ENCODE measurements at regions of chr14 and their contacts with region 1.

Region 1: DNA sequence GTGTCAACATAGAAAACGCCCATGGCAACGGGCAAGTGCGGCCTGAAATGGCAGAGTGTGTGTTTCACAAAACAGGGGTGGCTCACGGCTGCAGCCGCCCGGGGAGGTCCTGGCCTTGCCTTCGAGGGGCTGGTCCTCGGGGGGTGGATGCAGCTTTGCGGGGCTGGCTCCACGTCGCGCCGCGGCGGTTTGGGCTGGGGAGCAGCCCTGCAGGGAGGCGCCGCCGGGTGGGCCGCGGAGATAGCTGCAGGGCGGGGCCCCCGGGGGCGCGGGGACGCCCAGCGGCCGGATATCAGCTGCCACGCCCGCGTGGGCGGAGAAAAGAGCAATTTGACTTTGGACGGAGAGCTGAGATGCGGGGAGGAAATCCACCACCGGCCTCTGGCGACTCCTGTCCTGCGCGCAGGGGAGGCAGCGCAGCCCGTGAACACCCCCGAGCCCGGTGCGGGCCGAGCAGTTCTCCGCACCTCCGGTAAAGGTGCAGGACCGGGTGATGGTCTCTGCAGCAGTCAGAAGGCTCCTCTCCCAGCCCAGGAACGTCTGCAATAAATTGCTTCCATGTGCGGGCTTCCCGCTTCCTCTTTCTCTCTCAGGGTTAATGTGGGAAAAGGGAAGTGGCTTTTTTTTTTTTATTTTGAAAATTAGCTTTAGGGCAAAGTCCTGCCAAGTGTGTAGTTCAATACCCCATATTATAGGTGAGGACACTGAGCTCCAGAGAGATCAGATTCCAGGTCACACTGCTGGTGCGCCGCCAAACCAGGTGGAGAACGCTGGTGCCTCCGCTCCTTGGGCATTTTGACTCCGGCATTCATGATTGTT is 110.5 kb downstream of the ARF6 start:
- DNase-seq: peak; percentile 86
- H3K4me3 Mint-ChIP-seq: peak overlapping the region; percentile 92
- H3K27ac Mint-ChIP-seq: peak overlapping the region; percentile 98
- H3K4me1 Mint-ChIP-seq: peaks cover 42% of the 10 kb centered on the region
- H3K27me3 Mint-ChIP-seq: no peaks in the 10 kb centered on the region

Region 2: GRCh38 chr14:49767562-49768300 is 235.7 kb before region 1 on chr14 and contains the start of gene KLHDC2:
- CTCF ChIA-PET with region 1: no interaction called
- intact Hi-C with region 1: no loop called
- DNase-seq: peak; percentile 91
- H3K4me3 Mint-ChIP-seq: peak within 1 kb of the TSS; percentile 94
- H3K27ac Mint-ChIP-seq: peak within 1 kb of the TSS; percentile 99
- H3K4me1 Mint-ChIP-seq: peaks cover 34% of the 10 kb centered on the region
- H3K27me3 Mint-ChIP-seq: no peaks in the 10 kb centered on the region
- total RNA-seq, gene KLHDC2: 24.3 to 25.0 TPM

Region 3: GRCh38 chr14:49867831-49868723 is 135.3 kb before region 1 on chr14:
- CTCF ChIA-PET with region 1: interaction called, 5 read pairs
- intact Hi-C with region 1: loop called (anchors 1 kb)
- DNase-seq: peak; percentile 99
- H3K4me3 Mint-ChIP-seq: peak overlapping the region; percentile 92
- H3K27ac Mint-ChIP-seq: peak overlapping the region; percentile 94
- H3K4me1 Mint-ChIP-seq: peaks cover 20% of the 10 kb centered on the region
- H3K27me3 Mint-ChIP-seq: no peaks in the 10 kb centered on the region

Region 4: DNA sequence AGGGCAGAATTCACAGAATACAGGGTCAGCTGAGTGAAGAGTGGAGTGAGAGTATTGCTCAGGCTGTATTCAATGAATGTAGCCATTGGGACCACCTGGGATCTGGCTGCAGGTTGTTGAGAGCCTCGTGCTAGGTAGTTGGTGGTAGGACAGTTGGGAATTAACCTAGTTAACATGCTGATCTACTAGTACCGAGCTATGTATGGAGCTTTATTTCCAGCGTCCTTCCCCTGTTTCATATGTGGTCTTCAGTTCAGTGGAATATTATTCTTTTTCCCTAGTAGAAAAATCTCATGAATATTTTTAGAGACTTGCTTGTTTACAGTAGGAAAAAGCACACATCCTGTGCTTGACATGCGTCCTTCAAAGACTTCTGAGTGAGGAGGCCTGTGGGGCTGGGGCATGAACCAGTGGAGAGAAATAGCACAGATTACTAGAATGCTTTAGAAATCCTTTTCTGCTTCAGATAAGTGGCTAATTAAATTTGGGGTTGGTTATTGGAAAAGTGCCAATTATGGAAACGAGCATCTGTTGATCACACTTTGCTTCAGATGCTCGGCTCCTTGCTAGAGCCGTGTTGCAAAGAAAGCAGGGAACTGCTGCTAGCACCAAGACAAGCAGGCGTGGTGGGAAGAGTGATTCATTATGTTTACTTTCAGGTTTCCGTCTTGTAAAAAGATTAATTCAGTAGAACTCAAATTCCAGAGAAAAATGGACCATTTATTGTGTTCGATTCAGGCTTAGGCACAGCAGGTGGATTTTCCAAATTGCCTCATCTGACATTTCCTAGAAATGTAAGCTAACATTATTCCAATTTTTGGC is 56.9 kb before region 1 on chr14:
- CTCF ChIA-PET with region 1: interaction called, 3 read pairs
- intact Hi-C with region 1: loop called (anchors 1 kb)
- DNase-seq: peak; percentile 51
- H3K4me3 Mint-ChIP-seq: peak overlapping the region; percentile 44
- H3K27ac Mint-ChIP-seq: peak overlapping the region; percentile 62
- H3K4me1 Mint-ChIP-seq: peaks cover 64% of the 10 kb centered on the region
- H3K27me3 Mint-ChIP-seq: no peaks in the 10 kb centered on the region

Region 5: DNA sequence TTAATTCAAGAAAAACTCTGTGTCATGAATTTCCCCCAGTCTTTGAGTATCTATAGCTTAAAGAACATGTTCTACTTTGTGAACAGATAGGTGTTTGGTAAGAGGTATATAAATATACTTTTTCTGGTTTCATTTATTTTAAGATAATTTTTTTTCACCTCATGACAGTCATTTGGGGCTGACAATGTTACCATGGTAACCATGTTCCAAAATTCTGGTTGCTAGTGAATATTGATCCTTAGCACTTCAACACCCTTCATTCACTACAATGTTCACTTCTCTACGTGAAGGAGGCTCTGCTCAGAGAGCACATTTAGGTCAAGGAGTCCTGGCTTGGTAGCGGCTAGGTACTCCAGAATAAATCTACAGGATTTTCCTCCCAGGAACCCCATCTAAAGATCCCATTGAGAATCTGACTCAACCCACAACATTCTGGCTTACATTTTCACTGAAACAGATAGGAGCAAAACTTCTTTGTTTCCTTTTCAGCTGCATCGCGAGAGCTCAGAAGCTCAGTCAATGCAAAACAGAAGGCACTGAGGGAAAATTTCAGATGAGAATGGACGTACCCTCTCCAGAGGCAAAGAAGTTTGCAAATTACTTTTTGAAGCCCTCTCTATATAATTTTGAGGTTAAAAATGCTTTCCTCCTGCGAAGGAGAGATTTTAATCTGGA is 16.9 kb before region 1 on chr14:
- CTCF ChIA-PET with region 1: interaction called, 10 read pairs
- intact Hi-C with region 1: loop called (anchors 1 kb)
- DNase-seq: no peak
- H3K4me3 Mint-ChIP-seq: no peak overlapping the region
- H3K27ac Mint-ChIP-seq: peak overlapping the region; percentile 34
- H3K4me1 Mint-ChIP-seq: peaks cover 40% of the 10 kb centered on the region
- H3K27me3 Mint-ChIP-seq: no peaks in the 10 kb centered on the region

Region 6: DNA sequence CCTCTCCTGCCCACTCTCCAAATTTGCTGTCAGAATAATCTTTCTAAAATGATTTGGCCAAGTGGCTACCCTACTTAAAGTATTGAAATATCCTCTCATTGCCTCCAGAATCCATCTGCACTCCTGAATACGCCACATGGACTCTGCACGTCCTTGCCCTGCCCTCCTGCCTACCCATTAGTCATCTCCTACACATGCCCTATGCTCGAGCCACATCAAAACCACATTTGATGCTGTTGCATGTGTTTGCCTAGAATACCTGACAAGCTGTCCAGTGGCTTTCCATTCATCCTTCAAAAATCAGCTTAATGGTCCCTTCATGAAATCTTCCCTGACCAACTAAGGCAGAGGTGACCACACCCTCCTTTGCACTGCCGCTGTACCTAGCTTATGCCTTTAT is 95.9 kb after region 1 on chr14:
- CTCF ChIA-PET with region 1: interaction called, 5 read pairs
- intact Hi-C with region 1: loop called (anchors 2 kb)
- DNase-seq: no peak
- H3K4me3 Mint-ChIP-seq: no peak overlapping the region
- H3K27ac Mint-ChIP-seq: no peak overlapping the region
- H3K4me1 Mint-ChIP-seq: peaks cover 57% of the 10 kb centered on the region
- H3K27me3 Mint-ChIP-seq: no peaks in the 10 kb centered on the region

Region 7: DNA sequence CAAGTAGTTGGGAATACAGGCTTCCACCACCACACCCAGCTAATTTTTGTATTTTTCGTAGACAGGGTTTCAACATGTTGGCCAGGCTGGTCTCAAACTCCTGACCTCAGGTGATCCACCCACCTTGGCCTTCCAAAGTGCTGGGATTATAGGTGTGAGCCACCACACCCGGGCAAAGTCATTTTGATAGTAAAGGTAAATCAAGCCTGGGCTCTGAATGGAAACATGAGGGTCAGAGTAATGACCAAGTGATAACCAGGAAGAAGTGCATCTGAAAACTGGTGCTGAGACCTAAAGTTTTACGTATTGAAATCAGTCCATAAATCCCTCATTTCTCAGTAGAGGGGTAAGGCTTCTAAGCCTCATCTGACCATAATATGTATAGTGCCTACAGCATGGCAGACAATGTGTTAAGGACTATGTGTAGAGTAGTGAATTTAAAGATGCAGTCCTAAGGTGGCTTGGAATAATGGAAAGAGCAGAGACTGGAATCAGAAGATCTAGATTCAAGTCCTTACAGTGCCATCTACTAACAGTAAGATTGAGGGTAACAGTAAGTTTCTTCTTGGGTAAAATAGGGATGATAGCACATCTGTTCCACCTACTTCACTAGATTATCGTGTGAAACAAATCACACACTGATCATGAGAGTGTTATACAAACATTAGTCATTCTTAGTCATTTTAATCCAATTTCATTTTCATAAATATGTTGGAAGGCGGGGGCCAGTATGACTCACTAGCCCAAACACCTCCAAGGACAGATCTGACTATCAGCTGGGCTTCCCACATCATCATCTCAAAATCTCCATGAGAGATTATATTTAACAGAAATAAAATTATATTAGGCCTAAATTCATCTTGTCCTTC is 517.8 kb after region 1 on chr14:
- CTCF ChIA-PET with region 1: no interaction called
- intact Hi-C with region 1: loop called (anchors 1 kb)
- DNase-seq: peak; percentile 87
- H3K4me3 Mint-ChIP-seq: no peak overlapping the region
- H3K27ac Mint-ChIP-seq: peak overlapping the region; percentile 89
- H3K4me1 Mint-ChIP-seq: peaks cover 53% of the 10 kb centered on the region
- H3K27me3 Mint-ChIP-seq: no peaks in the 10 kb centered on the region